IMR-90 (cell line): ENCODE measurements at regions of chr2 and their contacts with region 1.

Region 1: DNA sequence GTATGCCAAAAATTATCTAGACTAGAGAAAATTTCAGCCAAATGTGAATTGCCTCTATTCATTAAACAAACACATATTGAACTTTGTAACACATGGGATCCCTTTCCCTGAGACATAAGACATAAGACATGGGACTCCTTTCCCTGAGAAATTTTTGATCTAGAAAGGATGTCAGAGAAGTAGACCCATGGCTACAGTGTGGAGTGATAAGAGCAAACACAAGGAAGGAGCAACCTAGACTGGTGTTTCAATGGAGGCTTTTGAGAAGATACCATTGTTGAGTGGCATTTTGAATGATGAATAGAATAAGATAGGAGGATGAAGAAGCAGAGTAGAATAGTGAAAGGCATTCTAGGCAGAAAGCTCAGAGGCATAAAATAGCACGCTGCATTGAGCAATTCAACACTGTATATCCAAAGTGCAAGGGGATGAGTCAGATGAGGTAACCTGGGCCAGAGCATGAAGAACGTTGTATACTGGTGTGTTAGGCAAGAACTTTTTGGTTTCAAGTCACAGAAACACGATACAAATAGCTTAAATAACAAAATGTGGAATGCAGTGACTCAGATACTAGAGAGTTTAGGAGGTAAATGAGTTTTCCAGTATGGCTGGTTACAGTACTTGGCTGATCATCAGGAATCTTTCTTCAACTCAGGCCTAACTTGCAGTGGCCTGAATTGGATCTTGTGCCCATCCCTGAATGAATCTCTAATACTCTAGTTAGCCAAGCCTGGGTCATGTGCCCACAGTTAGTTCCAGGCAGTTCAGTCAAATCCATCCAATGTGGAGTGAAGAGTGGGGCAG is 129.8 kb upstream of the TANK start:
- DNase-seq: peak; percentile 100
- ATAC-seq: peak; percentile 86
- H3K4me3 ChIP-seq: no peak overlapping the region
- H3K27ac ChIP-seq: peak overlapping the region; percentile 100
- H3K4me1 ChIP-seq: peaks cover 17% of the 10 kb centered on the region
- H3K27me3 ChIP-seq: no peaks in the 10 kb centered on the region
- CTCF ChIP-seq: no peak
- POLR2A ChIP-seq: no peak
- RAD21 ChIP-seq: 0 out of 2 replicates have a peak, but pooled peaks have one; percentile 2

Region 2: DNA sequence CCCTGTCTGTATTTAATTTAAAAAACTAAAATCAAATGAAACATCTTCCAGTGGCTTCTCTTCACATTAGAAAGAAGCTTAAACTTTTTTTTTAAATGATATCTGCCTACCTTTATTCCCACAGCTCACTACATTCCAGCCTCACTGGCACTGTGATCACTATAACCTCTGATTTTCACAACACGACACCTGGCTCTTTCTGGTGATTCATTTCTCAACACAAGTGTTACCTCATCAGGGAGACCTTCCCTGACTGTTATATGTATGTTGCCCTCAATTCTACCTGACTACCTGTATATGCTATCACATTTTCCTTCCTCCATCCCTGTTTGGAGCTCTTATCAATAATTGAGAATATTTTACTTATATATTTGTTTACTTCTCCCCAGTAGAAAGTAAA is 1490.8 kb before region 1 on chr2:
- CTCF ChIA-PET with region 1: no interaction called
- POLR2A ChIA-PET with region 1: no interaction called
- dilution Hi-C with region 1: no loop called
- in situ Hi-C with region 1: no loop called
- intact Hi-C with region 1: loop called (anchors 10 kb)
- DNase-seq: no peak
- ATAC-seq: no peak
- H3K4me3 ChIP-seq: no peak overlapping the region
- H3K27ac ChIP-seq: no peak overlapping the region
- H3K4me1 ChIP-seq: no peaks in the 10 kb centered on the region
- H3K27me3 ChIP-seq: no peaks in the 10 kb centered on the region
- CTCF ChIP-seq: no peak
- POLR2A ChIP-seq: no peak
- RAD21 ChIP-seq: no peak

Region 3: DNA sequence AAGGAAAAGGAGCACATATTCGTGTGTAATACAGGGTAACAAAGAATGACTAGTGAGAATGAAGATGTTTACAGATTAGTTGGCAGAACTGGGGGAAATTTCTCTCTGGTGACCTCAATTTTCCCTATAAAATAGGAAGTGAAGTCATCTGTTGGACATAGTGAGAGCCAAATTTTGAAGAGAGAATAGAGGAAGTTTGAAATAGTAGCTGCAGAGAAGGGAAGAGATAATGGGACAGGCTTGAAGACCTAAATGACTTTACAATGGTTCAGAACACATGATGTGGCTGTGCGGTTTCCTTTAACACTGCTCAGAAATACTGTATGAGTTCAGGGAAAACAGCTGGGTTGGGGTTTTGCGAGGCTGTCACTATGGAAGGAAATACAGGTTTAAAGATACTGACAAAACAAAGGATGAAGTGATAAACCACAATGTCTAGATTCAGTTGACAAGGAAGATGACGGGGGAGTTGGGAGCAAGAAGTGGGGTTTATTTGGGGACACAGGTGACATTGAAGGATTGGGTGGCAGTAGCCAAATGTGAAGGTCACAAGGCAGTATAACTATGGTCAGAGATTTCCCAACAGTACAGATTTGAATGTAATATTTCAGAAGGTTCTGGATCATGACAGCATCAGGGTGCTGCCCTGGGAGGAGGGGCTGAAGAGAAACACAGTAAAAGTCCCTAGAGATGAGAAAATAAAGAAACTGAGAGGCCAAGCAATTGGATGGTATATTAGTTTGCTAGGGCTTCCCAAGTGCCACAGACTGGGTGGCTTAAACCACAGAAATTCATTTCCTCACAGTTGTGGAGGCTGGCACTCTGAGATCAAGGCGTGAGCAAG is 47.1 kb after region 1 on chr2:
- CTCF ChIA-PET with region 1: no interaction called
- POLR2A ChIA-PET with region 1: no interaction called
- dilution Hi-C with region 1: no loop called
- in situ Hi-C with region 1: no loop called
- intact Hi-C with region 1: no loop called
- DNase-seq: peak; percentile 52
- ATAC-seq: no peak
- H3K4me3 ChIP-seq: no peak overlapping the region
- H3K27ac ChIP-seq: no peak overlapping the region
- H3K4me1 ChIP-seq: no peaks in the 10 kb centered on the region
- H3K27me3 ChIP-seq: no peaks in the 10 kb centered on the region
- CTCF ChIP-seq: no peak
- POLR2A ChIP-seq: no peak
- RAD21 ChIP-seq: no peak

Region 4: GRCh38 chr2:161160226-161161069 is 130.0 kb after region 1 on chr2 and contains the start of gene TANK:
- CTCF ChIA-PET with region 1: no interaction called
- POLR2A ChIA-PET with region 1: no interaction called
- dilution Hi-C with region 1: no loop called
- in situ Hi-C with region 1: no loop called
- intact Hi-C with region 1: loop called (anchors 5 kb)
- DNase-seq: peak; percentile 96
- ATAC-seq: peak; percentile 94
- H3K4me3 ChIP-seq: peak within 1 kb of the TSS; percentile 68
- H3K27ac ChIP-seq: peak within 1 kb of the TSS; percentile 88
- H3K4me1 ChIP-seq: no peaks in the 10 kb centered on the region
- H3K27me3 ChIP-seq: no peaks in the 10 kb centered on the region
- CTCF ChIP-seq: no peak
- POLR2A ChIP-seq: peak; percentile 94
- RAD21 ChIP-seq: no peak
- total RNA-seq, gene TANK: 41.9 and 46.4 TPM in 2 replicates